Activated naive CD4-positive, alpha-beta T cell treated with anti-CD3 and anti-CD28 coated beads for 36 hours (primary cell): ENCODE measurements at regions of chr3 and their contacts with region 1.

Region 1: DNA sequence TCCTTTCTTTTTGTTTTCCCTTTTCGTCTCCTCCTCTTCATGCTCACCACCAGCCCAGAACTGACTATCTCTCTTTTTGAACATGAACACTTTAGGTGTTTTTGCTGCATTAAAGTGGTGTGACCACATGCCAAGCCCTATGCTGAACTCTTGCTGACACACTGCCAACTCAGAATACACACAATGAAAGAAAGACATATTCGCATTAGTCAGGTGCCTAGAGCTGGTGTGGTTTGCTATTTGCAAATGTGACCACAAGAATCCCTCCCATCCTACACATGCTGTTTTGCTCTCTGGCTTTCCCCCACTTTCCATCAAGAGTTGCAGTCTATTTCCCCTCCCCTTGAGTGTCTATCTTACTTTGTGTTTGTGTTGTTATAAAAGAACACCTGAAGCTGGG is 967.8 kb upstream of the CFAP20DC start:
- DNase-seq: peak; percentile 86
- H3K4me3 Mint-ChIP-seq: peak overlapping the region; percentile 74
- H3K27ac Mint-ChIP-seq: peak overlapping the region; percentile 100
- H3K4me1 Mint-ChIP-seq: peaks cover 82% of the 10 kb centered on the region
- H3K27me3 Mint-ChIP-seq: no peaks in the 10 kb centered on the region

Region 2: DNA sequence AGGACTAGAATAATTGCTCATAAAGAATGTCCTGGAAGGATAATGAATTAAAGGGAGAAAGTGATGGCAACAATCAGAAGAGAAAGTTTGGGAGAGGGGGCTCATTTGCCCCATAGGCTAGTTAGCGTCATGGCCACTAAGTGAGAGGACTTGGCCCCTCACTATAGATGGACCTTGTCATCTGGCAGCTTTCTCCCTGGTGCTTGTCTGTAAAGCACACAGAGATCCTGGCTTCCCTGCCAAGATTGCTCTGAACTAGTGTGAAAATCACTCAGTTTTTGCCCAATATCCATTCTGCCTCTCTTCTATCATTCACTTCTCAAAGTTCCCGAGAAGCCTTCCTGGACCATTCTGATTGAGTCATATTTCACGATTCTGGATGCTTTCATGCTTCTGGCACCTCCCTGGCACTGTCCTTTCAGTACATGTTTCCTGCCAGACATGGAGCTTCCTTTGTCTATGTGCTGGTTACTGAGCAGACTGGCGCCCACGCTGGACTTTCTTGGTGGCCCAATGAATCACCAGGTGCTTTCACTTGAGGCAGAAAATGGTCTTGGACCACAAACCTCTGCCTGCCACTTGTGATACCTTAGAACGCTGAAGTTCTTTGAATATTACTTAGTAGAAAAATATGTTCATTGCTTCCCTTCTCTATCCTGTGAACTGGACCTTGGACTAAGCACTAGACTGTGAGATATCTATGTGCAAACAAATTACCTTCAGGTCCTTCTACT is 258.2 kb before region 1 on chr3:
- CTCF ChIA-PET with region 1: no interaction called
- intact Hi-C with region 1: loop called (anchors 5 kb)
- DNase-seq: peak; percentile 55
- H3K4me3 Mint-ChIP-seq: no peak overlapping the region
- H3K27ac Mint-ChIP-seq: no peak overlapping the region
- H3K4me1 Mint-ChIP-seq: peaks cover 86% of the 10 kb centered on the region
- H3K27me3 Mint-ChIP-seq: no peaks in the 10 kb centered on the region

Region 3: GRCh38 chr3:59978979-59979378 is 38.7 kb before region 1 on chr3:
- CTCF ChIA-PET with region 1: no interaction called
- intact Hi-C with region 1: loop called (anchors 1 kb)
- DNase-seq: peak; percentile 75
- H3K4me3 Mint-ChIP-seq: peak overlapping the region; percentile 39
- H3K27ac Mint-ChIP-seq: peak overlapping the region; percentile 94
- H3K4me1 Mint-ChIP-seq: peaks cover 83% of the 10 kb centered on the region
- H3K27me3 Mint-ChIP-seq: no peaks in the 10 kb centered on the region

Region 4: GRCh38 chr3:60030982-60031381 is 13.4 kb after region 1 on chr3:
- CTCF ChIA-PET with region 1: interaction called, 4 read pairs
- intact Hi-C with region 1: loop called (anchors 1 kb)
- DNase-seq: no peak
- H3K4me3 Mint-ChIP-seq: peak overlapping the region; percentile 6
- H3K27ac Mint-ChIP-seq: peak overlapping the region; percentile 90
- H3K4me1 Mint-ChIP-seq: peaks cover 77% of the 10 kb centered on the region
- H3K27me3 Mint-ChIP-seq: no peaks in the 10 kb centered on the region

Region 5: GRCh38 chr3:60053526-60054265 is 36.1 kb after region 1 on chr3:
- CTCF ChIA-PET with region 1: interaction called, 4 read pairs
- intact Hi-C with region 1: loop called (anchors 1 kb)
- DNase-seq: peak; percentile 80
- H3K4me3 Mint-ChIP-seq: peak overlapping the region; percentile 32
- H3K27ac Mint-ChIP-seq: peak overlapping the region; percentile 92
- H3K4me1 Mint-ChIP-seq: peaks cover 86% of the 10 kb centered on the region
- H3K27me3 Mint-ChIP-seq: no peaks in the 10 kb centered on the region

Region 6: GRCh38 chr3:60064210-60065178 is 46.9 kb after region 1 on chr3:
- CTCF ChIA-PET with region 1: no interaction called
- intact Hi-C with region 1: no loop called
- DNase-seq: peak; percentile 70
- H3K4me3 Mint-ChIP-seq: peak overlapping the region; percentile 11
- H3K27ac Mint-ChIP-seq: peak overlapping the region; percentile 88
- H3K4me1 Mint-ChIP-seq: peaks cover 89% of the 10 kb centered on the region
- H3K27me3 Mint-ChIP-seq: no peaks in the 10 kb centered on the region

Region 7: GRCh38 chr3:60202052-60202726 is 184.6 kb after region 1 on chr3:
- CTCF ChIA-PET with region 1: no interaction called
- intact Hi-C with region 1: no loop called
- DNase-seq: no peak
- H3K4me3 Mint-ChIP-seq: no peak overlapping the region
- H3K27ac Mint-ChIP-seq: no peak overlapping the region
- H3K4me1 Mint-ChIP-seq: no peaks in the 10 kb centered on the region
- H3K27me3 Mint-ChIP-seq: no peaks in the 10 kb centered on the region